Posterior cingulate gyrus (tissue), 11 donors: ENCODE measurements at regions of chr20 and their contacts with region 1.

Region 1: DNA sequence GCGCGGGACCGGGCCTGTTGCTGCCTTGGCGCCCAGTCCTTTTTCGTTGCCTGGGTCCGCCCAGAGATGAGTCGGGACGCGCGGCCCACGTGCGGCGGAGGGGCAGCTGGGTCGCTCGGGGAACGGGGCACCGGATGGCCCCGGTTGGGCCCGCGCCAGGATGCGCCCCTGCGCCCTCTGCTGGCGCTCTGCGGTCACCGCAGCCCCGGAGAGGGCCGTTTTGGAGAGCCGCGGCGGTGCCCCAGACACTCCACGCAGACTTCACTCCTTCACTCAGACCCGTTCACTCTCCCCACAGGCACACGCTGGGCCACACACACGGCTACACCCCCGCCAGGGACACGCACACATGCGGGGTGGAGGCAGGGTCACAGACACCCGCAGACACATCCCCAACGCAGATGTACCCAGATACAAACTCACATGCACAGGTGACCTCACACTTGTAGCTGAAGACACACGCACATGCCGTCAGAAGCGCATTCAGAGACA is 38.8 kb downstream of the SRC start:
- DNase-seq: peak; percentile 32 to 95 (median 62)

Region 2: DNA sequence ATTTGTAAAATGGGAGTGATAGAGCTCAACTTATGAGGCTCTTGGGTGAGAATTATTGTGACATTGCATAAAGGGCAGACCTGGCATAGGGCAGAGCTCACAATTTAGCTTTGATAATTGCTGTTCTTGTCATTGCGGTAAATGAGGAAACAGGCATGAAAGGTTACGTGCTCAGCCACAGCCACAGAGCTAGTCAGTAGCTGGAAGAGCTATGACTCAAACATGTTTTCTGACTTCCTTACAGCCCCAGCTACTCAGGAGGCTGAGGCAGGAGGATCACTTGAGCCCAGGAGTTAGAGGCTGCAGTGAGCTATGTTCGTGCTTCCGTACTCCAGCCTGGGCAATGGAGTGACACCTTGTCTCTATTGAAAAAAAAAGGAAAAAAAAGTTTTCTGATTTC is 119.6 kb before region 1 on chr20:
- intact Hi-C with region 1: loop called (anchors 5 kb)
- DNase-seq: no peak

Region 3: GRCh38 chr20:37396416-37397075 is 11.8 kb after region 1 on chr20:
- intact Hi-C with region 1: no loop called
- DNase-seq: peak in 2 of 10 donors; percentile 47 to 84